AG04449 (cell line): ENCODE measurements at regions of chr6 and their contacts with region 1.

Region 1: GRCh38 chr6:150079604-150080003 is 10.7 kb upstream of the ULBP3 start:
- DNase-seq: no peak
- H3K4me3 ChIP-seq: no peak overlapping the region
- CTCF ChIP-seq: no peak

Region 2: DNA sequence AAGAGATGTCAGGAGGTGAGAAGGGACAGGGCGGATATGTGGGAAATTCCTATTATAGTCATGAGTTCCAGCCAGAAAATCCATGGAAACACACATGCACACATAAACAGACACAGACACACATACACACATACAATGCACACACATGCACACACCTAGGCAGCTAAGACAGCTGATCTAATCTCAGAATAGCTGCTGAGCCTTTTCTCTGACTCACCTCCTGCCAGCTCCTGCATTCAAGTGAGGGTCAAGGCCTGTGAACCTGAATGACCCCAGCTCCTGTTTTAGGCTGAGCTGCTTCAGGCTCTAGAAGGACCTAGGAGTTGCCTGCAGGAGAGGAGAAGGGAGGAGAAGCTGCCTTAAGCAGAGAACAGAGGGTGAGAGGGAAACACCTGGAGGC is 32.7 kb before region 1 on chr6:
- CTCF ChIA-PET with region 1: no interaction called
- POLR2A ChIA-PET with region 1: no interaction called
- DNase-seq: no peak
- H3K4me3 ChIP-seq: no peak overlapping the region
- CTCF ChIP-seq: no peak

Region 3: DNA sequence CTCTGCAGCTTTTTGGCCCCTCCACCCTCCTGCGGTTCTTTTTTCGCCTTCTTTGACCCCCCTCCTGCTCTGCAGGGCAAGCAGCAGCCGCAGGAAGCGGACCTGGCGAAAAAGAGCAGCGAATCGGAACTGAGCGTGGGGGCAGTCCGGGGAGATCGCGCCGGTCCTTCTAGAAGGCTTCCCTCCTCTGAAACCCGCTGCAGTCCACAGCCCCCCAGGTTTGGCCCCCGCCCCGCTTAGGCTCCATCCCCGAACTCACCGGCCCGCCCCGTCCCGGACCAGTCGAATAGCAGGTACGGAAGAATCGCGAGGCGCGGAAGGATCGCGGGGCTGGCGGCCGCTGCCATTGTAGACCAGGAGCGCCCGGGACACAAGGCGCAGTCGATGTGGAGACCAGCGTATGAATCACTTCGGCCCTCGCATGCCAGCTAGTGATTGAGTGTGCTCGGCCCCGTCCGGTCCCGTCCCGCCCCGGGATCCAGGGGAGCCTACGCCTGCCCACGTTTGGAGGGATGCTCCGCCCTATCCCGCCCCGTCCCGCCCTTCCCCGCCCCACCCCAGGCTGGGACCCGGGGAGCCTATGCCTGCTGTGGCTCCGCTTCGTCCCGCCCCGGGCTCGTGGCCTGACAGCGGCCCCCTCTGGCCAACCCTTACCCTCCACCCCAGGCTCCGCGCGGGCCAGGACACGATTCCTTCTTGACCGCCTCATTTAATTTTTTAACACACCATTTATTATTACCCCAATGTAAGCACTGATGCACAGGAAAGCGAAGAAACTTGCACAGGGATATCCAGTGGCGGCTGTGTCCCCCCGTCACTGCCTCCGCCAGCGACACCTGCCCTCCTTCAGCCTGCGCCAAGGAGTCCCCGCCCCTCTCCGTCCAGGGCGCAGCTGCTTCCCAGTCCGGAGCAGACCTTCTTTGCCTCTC is 10.6 kb before region 1 on chr6 and contains the start of gene ULBP3:
- CTCF ChIA-PET with region 1: interaction called, 33 read pairs
- POLR2A ChIA-PET with region 1: no interaction called
- DNase-seq: peak; percentile 68
- H3K4me3 ChIP-seq: peak within 1 kb of the TSS; percentile 76
- CTCF ChIP-seq: peak; percentile 75

Region 4: DNA sequence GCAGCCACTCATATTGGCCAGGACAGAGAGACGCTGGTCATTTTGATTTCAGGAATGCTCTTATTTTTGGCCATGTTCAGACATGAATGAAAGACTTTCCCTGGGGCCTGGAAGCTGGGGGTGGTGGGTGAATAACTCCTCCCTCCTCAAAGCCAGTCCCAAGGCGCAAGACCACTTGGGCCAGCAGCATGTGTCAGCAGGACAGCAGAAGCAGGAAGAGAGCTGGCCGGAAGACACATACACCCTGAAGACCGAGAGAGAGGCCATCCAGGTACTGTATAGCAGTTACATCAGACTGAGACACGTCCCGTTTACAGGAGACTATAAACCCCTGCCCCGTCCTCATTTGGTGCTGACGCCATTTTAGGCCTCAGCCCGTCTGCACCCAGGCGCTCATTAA is 18.6 kb after region 1 on chr6:
- CTCF ChIA-PET with region 1: interaction called, 30 read pairs
- POLR2A ChIA-PET with region 1: no interaction called
- DNase-seq: no peak
- H3K4me3 ChIP-seq: no peak overlapping the region
- CTCF ChIP-seq: no peak

Region 5: DNA sequence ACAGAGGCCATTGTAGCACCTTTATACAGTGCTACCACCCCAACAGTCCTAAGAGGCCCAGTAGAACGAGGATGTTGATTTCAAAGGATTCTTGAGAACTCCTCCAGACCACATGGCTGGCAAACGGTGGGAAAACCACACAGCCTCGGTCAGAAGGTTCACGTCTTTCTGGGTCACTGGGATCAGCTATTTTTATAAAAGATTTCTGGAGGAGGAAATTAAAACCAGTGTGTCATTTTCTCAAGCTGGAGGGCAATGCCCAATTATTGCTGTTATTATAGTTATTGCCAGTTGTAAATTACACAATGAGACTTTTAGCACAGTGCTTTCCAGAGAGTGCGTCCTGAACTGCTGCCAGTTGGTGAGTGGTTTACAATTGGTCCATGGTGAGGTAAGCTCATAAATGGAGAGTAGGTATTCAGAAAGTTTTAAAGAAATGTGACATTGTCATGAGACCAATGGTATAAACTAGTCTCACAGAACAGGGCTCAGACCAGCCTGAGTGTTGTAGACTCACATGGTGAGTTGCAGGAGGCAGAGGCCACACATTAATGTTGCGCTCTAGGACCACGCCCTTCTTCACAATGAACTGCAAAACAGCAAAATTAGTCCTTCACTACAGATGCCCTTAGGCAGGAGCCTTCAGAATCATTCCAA is 54.8 kb after region 1 on chr6:
- CTCF ChIA-PET with region 1: interaction called, 11 read pairs
- POLR2A ChIA-PET with region 1: no interaction called
- DNase-seq: no peak
- H3K4me3 ChIP-seq: no peak overlapping the region
- CTCF ChIP-seq: no peak

Region 6: DNA sequence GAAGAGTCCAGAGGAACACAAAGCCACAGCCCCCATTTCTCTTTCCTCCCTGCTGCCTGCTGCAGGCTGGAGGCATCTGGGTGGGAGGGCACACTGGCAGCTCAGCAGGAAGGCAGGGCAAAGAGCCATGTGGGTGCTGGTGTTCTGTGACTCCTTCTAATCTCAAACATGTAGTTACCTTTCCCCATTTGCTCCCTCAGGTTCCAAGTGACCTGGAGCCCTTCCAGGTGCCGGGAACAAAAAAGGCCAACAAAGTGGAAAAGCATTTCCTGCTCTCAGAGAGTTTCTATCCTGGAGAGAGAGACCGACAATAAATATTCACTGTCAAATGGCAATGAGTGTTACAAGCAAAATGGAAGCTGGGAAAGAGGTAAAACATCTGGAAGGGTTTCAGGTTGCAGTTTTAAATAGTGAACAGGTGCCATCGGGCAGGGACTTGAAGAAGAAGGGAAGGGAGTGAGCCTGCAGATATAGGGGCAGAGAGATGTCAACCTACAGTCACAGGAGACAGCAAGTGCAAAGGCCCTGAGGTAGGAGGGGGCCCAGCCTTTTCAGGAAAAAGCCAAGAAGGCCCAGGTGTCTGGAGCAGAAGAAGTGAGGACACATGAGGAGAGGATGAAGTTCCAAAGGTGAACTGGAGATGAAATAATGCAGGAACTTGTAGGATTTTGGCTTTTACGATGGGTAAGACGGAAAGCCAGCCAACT is 245.6 kb after region 1 on chr6:
- CTCF ChIA-PET with region 1: interaction called, 17 read pairs
- POLR2A ChIA-PET with region 1: no interaction called
- DNase-seq: no peak
- H3K4me3 ChIP-seq: no peak overlapping the region
- CTCF ChIP-seq: no peak

Region 7: GRCh38 chr6:150343434-150343833 is 263.8 kb after region 1 on chr6:
- CTCF ChIA-PET with region 1: interaction called, 64 read pairs
- POLR2A ChIA-PET with region 1: no interaction called
- DNase-seq: no peak
- H3K4me3 ChIP-seq: no peak overlapping the region
- CTCF ChIP-seq: no peak

Region 8: DNA sequence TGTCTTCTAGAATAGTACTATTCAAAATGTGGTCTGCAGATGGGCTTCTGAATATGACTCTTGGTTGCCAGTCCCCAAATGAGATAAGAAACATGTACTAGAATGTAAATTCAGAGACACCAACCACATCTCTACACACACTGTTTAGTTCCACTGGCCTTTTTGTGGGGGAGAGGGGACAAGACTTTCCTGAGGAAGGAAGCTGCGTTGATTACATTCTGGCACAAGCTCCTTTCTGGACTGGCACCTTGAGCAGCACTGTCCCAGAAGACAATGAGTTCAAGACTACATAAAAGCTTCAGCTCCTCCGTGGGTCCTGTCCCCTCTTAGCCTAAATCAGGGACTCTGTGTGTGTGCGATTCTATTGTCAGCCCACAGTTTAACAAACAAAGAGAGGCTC is 282.3 kb after region 1 on chr6:
- CTCF ChIA-PET with region 1: interaction called, 16 read pairs
- POLR2A ChIA-PET with region 1: no interaction called
- DNase-seq: no peak
- H3K4me3 ChIP-seq: no peak overlapping the region
- CTCF ChIP-seq: no peak